Activated B cell treated with CpG ODN at 0.5 μM for 24 hours (primary cell): ENCODE measurements at regions of chr17 and their contacts with region 1.

Region 1: DNA sequence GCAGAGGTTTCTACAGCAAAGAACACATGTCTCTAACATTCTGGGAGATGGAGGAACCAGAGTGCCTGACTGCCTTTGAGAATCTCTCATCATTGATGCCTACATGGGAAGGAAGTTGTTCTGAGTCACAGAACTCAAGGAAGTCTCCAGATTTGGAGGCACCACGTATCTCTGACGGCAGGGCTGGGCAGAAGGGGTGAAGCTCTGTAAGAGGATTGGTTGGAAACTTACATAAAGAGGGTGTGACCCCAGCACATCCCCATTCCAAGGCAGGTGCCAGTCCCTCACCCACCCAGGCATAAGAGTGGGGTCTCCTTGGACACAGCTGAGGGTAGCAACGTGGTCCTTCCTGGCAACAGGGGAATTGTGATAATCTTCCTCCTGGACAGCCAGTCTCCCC is 17.4 kb downstream of the TNFRSF13B start:
- DNase-seq: no peak
- ATAC-seq: peak; percentile 35
- H3K4me3 Mint-ChIP-seq: peak overlapping the region; percentile 2
- H3K27ac Mint-ChIP-seq: peak overlapping the region; percentile 62
- H3K4me1 Mint-ChIP-seq: peaks cover 75% of the 10 kb centered on the region
- H3K27me3 Mint-ChIP-seq: no peaks in the 10 kb centered on the region
- CTCF ChIP-seq: no peak

Region 2: GRCh38 chr17:16938496-16939207 is 15.9 kb before region 1 on chr17:
- CTCF ChIA-PET with region 1: no interaction called
- POLR2A ChIA-PET with region 1: no interaction called
- intact Hi-C with region 1: no loop called
- DNase-seq: no peak
- ATAC-seq: no peak
- H3K4me3 Mint-ChIP-seq: no peak overlapping the region
- H3K27ac Mint-ChIP-seq: peak overlapping the region; percentile 57
- H3K4me1 Mint-ChIP-seq: peaks cover 28% of the 10 kb centered on the region
- H3K27me3 Mint-ChIP-seq: no peaks in the 10 kb centered on the region
- CTCF ChIP-seq: no peak

Region 3: DNA sequence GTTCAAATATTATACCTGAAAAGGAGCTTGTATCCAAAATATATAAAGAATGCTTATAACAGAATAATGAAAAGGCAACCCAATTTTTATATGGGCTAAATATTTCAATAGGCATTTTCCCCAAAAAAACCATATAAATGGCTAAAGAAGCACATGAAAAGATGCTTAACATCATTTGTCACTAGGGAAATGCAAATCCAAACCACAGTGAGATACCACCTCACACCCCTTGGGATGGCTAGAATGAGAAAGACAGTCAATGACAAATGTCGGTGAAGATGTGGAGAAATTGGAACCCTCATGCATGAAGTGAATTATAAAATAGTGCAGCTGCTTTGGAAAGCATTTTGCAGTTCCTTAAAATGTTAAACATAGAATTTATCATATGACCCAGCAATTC is 14.3 kb after region 1 on chr17:
- CTCF ChIA-PET with region 1: no interaction called
- POLR2A ChIA-PET with region 1: interaction called, 7 read pairs
- intact Hi-C with region 1: loop called (anchors 1 kb)
- DNase-seq: no peak
- ATAC-seq: peak; percentile 8
- H3K4me3 Mint-ChIP-seq: peak overlapping the region; percentile 91
- H3K27ac Mint-ChIP-seq: peak overlapping the region; percentile 94
- H3K4me1 Mint-ChIP-seq: peaks cover 87% of the 10 kb centered on the region
- H3K27me3 Mint-ChIP-seq: no peaks in the 10 kb centered on the region
- CTCF ChIP-seq: no peak

Region 4: GRCh38 chr17:16980813-16981731 is 26.6 kb after region 1 on chr17:
- CTCF ChIA-PET with region 1: no interaction called
- POLR2A ChIA-PET with region 1: interaction called, 25 read pairs
- intact Hi-C with region 1: no loop called
- DNase-seq: peak; percentile 64
- ATAC-seq: peak; percentile 83
- H3K4me3 Mint-ChIP-seq: peak overlapping the region; percentile 86
- H3K27ac Mint-ChIP-seq: peak overlapping the region; percentile 98
- H3K4me1 Mint-ChIP-seq: peaks cover 84% of the 10 kb centered on the region
- H3K27me3 Mint-ChIP-seq: no peaks in the 10 kb centered on the region
- CTCF ChIP-seq: no peak

Region 5: DNA sequence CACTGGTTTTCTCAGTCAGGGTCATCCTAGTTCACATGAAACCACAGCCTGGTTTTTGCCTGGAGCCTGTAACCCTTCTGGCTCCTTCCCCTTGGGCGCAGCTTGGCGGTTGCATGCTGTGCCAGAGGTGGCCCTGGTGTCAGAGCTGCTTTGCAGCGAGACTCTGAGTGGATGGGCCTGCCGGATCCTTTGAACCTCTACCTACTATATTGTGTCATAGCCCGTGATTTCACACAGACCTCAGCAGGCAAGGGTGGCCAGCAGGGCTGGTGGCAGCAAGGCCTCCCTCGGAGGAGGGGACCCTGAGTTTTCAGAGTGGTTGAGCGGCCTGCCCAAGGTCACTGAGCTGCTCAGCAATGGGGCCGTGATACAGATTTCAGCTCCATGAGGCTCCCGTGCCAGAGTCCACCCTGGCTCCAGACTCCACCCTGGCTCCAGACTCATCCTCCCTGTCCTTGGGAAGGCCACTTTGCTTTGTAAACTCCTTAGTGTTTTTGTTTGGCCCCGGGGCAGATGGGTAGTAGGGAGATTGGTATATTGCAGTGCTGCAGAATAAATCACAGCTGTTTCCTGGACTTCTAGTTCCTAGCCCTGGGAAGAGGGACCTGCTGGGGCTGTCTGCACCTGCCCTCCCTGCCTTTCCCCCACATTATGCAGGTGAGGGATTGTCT is 97.4 kb after region 1 on chr17:
- CTCF ChIA-PET with region 1: no interaction called
- POLR2A ChIA-PET with region 1: no interaction called
- intact Hi-C with region 1: no loop called
- DNase-seq: peak; percentile 12
- ATAC-seq: no peak
- H3K4me3 Mint-ChIP-seq: no peak overlapping the region
- H3K27ac Mint-ChIP-seq: no peak overlapping the region
- H3K4me1 Mint-ChIP-seq: peaks cover 70% of the 10 kb centered on the region
- H3K27me3 Mint-ChIP-seq: no peaks in the 10 kb centered on the region
- CTCF ChIP-seq: no peak